CD14-positive monocyte (primary cell): ENCODE measurements at regions of chr6 and their contacts with region 1.

Region 1: GRCh38 chr6:137866914-137867684 is at the start of gene TNFAIP3:
- DNase-seq: peak; percentile 96 to 98 (median 97)
- H3K4me3 ChIP-seq: peak within 1 kb of the TSS; percentile 73 to 93 (median 87)
- H3K4me3 Mint-ChIP-seq: peak within 1 kb of the TSS; percentile 93 to 96
- H3K27ac ChIP-seq: peak within 1 kb of the TSS; percentile 97 to 98
- H3K27ac Mint-ChIP-seq: peak within 1 kb of the TSS; percentile 99 to 100 (median 99)
- H3K4me1 ChIP-seq: peaks cover 45 to 52% of the 10 kb centered on the region in 2 donors
- H3K4me1 Mint-ChIP-seq: peaks cover 60% of the 10 kb centered on the region
- H3K27me3 ChIP-seq: no peaks in the 10 kb centered on the region
- H3K27me3 Mint-ChIP-seq: peaks cover 0 to 2% (median 1%) of the 10 kb centered on the region in 3 donors
- CTCF ChIP-seq: peak; percentile 79
- polyA plus RNA-seq, gene TNFAIP3: 35.5 to 273 (median 38.4) TPM

Region 2: DNA sequence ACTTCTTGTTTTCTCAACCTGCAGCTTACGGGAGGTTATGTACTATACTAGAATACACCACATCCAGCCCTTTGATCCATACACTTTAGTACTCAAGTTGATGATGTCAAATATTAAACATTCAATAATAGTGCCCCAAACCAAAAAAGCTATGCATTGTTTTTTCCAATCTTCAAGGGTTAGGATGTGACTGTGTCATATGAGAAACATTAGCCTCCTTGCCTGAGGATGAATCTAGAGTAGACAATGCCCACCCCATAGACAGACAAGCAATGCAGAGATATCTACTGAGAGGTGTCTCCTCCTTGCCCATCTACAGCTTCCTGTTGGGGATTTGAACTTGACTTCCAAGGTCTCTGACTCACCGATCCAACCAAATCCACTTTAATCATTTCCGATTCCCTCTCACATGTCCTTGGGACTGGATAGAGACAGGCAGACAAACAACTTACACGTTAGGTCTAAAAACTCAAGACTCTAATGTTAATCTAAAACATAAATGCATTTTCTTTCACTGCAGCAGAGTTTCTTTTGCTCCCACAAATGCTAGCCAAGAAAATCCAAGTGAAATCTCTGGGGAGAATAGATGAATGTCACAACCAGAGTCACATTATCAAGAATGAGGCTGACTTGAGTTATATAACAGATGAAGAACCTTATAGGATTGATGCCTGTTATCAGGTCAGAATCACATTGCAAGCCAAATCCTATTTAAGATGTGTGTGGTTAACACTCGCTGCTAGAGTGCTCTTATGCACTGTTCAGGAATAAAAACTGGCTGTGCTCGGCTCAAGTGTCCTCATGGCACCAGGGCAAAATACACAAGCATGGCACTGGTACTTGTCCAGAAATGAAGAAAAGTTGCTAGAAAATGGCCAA is 75.6 kb before region 1 on chr6:
- intact Hi-C with region 1: loop called in 1 of 2 experiments (anchors 5 kb)
- DNase-seq: no peak
- H3K4me3 ChIP-seq: no peak overlapping the region
- H3K4me3 Mint-ChIP-seq: no peak overlapping the region
- H3K27ac ChIP-seq: peak overlapping the region in 1 of 2 donors; percentile 83
- H3K27ac Mint-ChIP-seq: peak overlapping the region in 4 of 7 donors; percentile 27 to 99 (median 94)
- H3K4me1 ChIP-seq: peaks cover 25 to 29% of the 10 kb centered on the region in 2 donors
- H3K4me1 Mint-ChIP-seq: peaks cover 27% of the 10 kb centered on the region
- H3K27me3 ChIP-seq: no peaks in the 10 kb centered on the region
- H3K27me3 Mint-ChIP-seq: peaks cover 0 to 8% (median 0%) of the 10 kb centered on the region in 3 donors
- CTCF ChIP-seq: no peak

Region 3: GRCh38 chr6:137811121-137811915 is 55.8 kb before region 1 on chr6:
- intact Hi-C with region 1: loop called (anchors 5 kb)
- DNase-seq: peak; percentile 98 to 100 (median 99)
- H3K4me3 ChIP-seq: peak overlapping the region in 1 of 3 experiments; percentile 10
- H3K4me3 Mint-ChIP-seq: peak overlapping the region; percentile 20 to 81
- H3K27ac ChIP-seq: peak overlapping the region; percentile 80 to 97
- H3K27ac Mint-ChIP-seq: peak overlapping the region; percentile 98 to 99 (median 99)
- H3K4me1 ChIP-seq: peaks cover 29 to 33% of the 10 kb centered on the region in 2 donors
- H3K4me1 Mint-ChIP-seq: peaks cover 27% of the 10 kb centered on the region
- H3K27me3 ChIP-seq: no peaks in the 10 kb centered on the region
- H3K27me3 Mint-ChIP-seq: peaks cover 0 to 1% (median 0%) of the 10 kb centered on the region in 3 donors
- CTCF ChIP-seq: no peak

Region 4: GRCh38 chr6:137821491-137821890 is 45.6 kb before region 1 on chr6:
- intact Hi-C with region 1: no loop called
- DNase-seq: no peak
- H3K4me3 ChIP-seq: no peak overlapping the region
- H3K4me3 Mint-ChIP-seq: no peak overlapping the region
- H3K27ac ChIP-seq: no peak overlapping the region
- H3K27ac Mint-ChIP-seq: peak overlapping the region in 1 of 7 donors; percentile 53
- H3K4me1 ChIP-seq: peaks cover 6 to 21% of the 10 kb centered on the region in 2 donors
- H3K4me1 Mint-ChIP-seq: peaks cover 28% of the 10 kb centered on the region
- H3K27me3 ChIP-seq: no peaks in the 10 kb centered on the region
- H3K27me3 Mint-ChIP-seq: peaks cover 0 to 2% (median 2%) of the 10 kb centered on the region in 3 donors
- CTCF ChIP-seq: no peak

Region 5: DNA sequence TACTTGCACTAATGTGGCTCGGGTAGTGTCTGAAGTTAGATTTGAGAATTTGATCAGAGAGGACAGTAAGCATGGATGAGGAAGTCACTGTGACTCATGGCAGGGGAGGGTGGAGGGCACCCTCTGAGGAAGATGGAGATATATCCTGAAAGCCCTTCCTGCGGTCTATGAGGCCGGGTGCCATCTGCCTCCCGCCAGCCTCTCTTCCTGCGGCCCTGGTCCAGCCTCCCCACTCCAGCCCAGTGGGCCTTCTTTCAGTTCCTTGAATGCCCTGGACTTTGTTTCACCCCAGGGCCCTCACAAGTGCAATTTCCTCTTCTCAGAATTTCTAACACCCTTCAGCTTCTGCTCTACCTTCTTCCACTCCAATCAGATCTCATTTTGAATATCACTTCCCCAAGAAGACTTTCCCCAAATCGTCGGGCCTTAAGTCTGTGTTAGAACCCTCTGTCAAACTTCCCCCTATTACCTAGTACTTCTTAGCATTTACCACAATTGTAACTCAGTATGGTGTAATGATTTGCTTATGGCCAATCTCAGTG is 20.3 kb before region 1 on chr6:
- intact Hi-C with region 1: loop called in 1 of 2 experiments (anchors 2 kb)
- DNase-seq: peak; percentile 95 to 98 (median 97)
- H3K4me3 ChIP-seq: peak overlapping the region in 1 of 3 experiments; percentile 49
- H3K4me3 Mint-ChIP-seq: no peak overlapping the region
- H3K27ac ChIP-seq: peak overlapping the region; percentile 78 to 95
- H3K27ac Mint-ChIP-seq: no peak overlapping the region
- H3K4me1 ChIP-seq: peaks cover 47 to 63% of the 10 kb centered on the region in 2 donors
- H3K4me1 Mint-ChIP-seq: peaks cover 22% of the 10 kb centered on the region
- H3K27me3 ChIP-seq: no peaks in the 10 kb centered on the region
- H3K27me3 Mint-ChIP-seq: no peaks in the 10 kb centered on the region
- CTCF ChIP-seq: no peak

Region 6: DNA sequence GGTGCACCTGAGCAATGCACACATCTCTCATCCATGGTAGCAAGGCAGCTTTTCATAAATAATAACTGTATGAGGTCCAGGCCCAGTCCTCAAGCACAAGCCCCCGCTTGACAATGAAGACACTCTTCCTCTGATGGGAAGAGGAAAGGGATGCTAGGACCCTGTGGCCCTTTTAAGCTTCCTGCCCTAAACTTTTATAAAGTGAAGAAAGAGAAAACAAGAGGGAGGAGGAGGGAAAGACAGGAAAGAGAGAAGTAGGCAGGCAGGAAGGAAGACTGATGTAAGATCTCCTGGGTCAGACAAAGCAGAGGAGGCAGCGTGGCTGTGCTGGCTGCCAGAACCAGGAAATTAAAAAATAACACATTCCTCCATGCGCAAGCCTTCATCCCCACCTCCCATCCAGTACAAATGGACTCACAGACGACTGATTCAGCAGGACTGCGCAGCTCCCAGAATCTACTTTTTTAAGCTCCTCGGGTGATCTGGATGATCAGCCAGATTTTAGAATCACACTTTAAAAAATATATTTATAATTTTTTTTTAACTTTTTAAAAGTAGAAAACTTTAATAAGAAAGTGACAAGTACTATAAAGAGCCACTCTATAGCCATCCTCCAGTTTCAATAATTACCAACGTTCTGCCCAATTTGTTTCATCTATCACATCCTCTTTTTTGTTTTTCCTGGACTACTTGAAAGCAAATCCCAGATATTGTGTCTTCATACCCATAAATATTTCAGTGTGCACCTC is 16.5 kb after region 1 on chr6:
- intact Hi-C with region 1: loop called in 1 of 2 experiments (anchors 2 kb)
- DNase-seq: peak; percentile 52 to 70 (median 61)
- H3K4me3 ChIP-seq: peak overlapping the region in 1 of 3 experiments; percentile 33
- H3K4me3 Mint-ChIP-seq: peak overlapping the region in 1 of 2 donors; percentile 43
- H3K27ac ChIP-seq: peak overlapping the region; percentile 71 to 73
- H3K27ac Mint-ChIP-seq: peak overlapping the region; percentile 81 to 97 (median 94)
- H3K4me1 ChIP-seq: peaks cover 26 to 41% of the 10 kb centered on the region in 2 donors
- H3K4me1 Mint-ChIP-seq: peaks cover 33% of the 10 kb centered on the region
- H3K27me3 ChIP-seq: no peaks in the 10 kb centered on the region
- H3K27me3 Mint-ChIP-seq: peaks cover 0 to 3% (median 0%) of the 10 kb centered on the region in 3 donors
- CTCF ChIP-seq: no peak

Region 7: GRCh38 chr6:137944793-137945498 is 77.8 kb after region 1 on chr6:
- intact Hi-C with region 1: loop called in 1 of 2 experiments (anchors 5 kb)
- DNase-seq: peak; percentile 32 to 63 (median 56)
- H3K4me3 ChIP-seq: no peak overlapping the region
- H3K4me3 Mint-ChIP-seq: peak overlapping the region in 1 of 2 donors; percentile 29
- H3K27ac ChIP-seq: no peak overlapping the region
- H3K27ac Mint-ChIP-seq: peak overlapping the region in 4 of 7 donors; percentile 7 to 73 (median 54)
- H3K4me1 ChIP-seq: peaks cover 8 to 20% of the 10 kb centered on the region in 2 donors
- H3K4me1 Mint-ChIP-seq: peaks cover 26% of the 10 kb centered on the region
- H3K27me3 ChIP-seq: no peaks in the 10 kb centered on the region
- H3K27me3 Mint-ChIP-seq: peaks cover 0 to 6% (median 0%) of the 10 kb centered on the region in 3 donors
- CTCF ChIP-seq: peak; percentile 83

Region 8: GRCh38 chr6:137958811-137959565 is 91.9 kb after region 1 on chr6:
- intact Hi-C with region 1: no loop called
- DNase-seq: peak; percentile 86 to 96 (median 95)
- H3K4me3 ChIP-seq: peak overlapping the region in 1 of 3 experiments; percentile 38
- H3K4me3 Mint-ChIP-seq: peak overlapping the region in 1 of 2 donors; percentile 47
- H3K27ac ChIP-seq: peak overlapping the region; percentile 80 to 87
- H3K27ac Mint-ChIP-seq: peak overlapping the region; percentile 88 to 99 (median 97)
- H3K4me1 ChIP-seq: peaks cover 32 to 45% of the 10 kb centered on the region in 2 donors
- H3K4me1 Mint-ChIP-seq: peaks cover 43% of the 10 kb centered on the region
- H3K27me3 ChIP-seq: no peaks in the 10 kb centered on the region
- H3K27me3 Mint-ChIP-seq: peaks cover 0 to 3% (median 0%) of the 10 kb centered on the region in 3 donors
- CTCF ChIP-seq: no peak